Sciatic nerve (tissue), 2 donors: ENCODE measurements at regions of chr15 and their contacts with region 1.

Region 1: GRCh38 chr15:36617529-36618196 is 38.2 kb downstream of the CDIN1 start:
- DNase-seq: no peak
- ATAC-seq: no peak

Region 2: DNA sequence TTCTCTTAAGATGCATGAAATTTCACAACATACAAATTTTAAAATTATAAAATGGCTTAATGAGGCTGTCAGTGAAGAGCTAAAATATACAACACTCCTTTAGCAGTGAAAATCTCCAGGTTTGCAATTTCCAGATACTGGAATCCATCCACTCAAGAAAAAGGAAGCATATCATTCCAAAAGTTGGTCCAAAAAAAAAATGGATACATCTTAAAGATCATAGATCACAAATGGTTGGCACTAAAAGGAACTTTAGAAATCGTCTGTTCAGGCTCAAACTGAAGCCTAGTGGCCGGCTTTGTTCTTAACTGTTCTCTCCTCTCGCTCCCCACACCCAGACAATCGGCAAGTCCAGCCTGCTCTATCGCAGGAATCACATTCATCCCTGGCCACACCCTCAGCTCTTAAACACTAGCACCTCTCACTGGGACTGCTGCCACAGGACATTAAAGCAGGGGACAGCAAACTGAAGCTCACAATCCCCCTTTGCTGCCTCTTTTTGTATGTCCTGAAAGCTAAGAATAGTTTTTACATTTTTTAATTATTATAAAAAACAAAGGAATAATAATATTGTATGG is 168.5 kb before region 1 on chr15:
- intact Hi-C with region 1: loop called (anchors 10 kb)
- DNase-seq: no peak
- ATAC-seq: no peak